HEK293 (cell line): ENCODE measurements at regions of chr4 and their contacts with region 1.

Region 1: DNA sequence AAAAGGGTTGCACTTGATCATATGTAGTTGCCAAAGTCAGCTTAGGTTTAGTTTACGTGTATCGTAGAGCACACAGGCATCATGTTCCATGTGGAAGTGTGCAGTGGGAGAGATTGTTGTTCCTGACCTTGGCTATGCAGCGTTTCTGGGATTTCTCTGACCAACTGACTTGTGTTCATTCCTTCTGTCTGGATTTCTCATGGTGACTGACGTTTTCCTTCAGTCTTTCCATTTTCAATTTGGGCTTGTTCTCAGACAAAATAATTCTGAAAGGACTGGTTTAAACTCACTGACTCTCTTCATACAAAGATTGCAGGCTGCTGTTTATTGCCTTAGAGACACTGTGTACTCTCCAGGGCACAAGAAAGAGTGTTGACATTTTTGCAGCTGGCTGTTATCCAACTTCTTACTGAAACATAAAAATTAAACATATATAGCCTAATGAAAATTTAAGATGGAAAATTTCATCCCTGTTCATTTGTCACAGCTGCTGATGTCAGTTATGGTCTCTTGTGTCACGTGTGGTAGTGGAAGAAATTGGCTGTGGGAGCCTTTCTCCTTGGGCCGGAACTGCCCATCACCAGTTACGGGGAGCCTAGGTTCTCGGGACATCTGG is 95.4 kb downstream of the TNIP2 start:
- H3K4me3 ChIP-seq: no peak overlapping the region
- H3K27ac ChIP-seq: no peak overlapping the region
- H3K4me1 ChIP-seq: no peaks in the 10 kb centered on the region
- CTCF ChIP-seq: no peak

Region 2: GRCh38 chr4:2462218-2462991 is 198.3 kb before region 1 on chr4:
- CTCF ChIA-PET with region 1: no interaction called
- POLR2A ChIA-PET with region 1: no interaction called
- H3K4me3 ChIP-seq: peak overlapping the region; percentile 23
- H3K27ac ChIP-seq: peak overlapping the region; percentile 54; the same call in 1 of the 2 replicates
- H3K4me1 ChIP-seq: no peaks in the 10 kb centered on the region; the same call in 1 of the 2 replicates
- CTCF ChIP-seq: no peak

Region 3: DNA sequence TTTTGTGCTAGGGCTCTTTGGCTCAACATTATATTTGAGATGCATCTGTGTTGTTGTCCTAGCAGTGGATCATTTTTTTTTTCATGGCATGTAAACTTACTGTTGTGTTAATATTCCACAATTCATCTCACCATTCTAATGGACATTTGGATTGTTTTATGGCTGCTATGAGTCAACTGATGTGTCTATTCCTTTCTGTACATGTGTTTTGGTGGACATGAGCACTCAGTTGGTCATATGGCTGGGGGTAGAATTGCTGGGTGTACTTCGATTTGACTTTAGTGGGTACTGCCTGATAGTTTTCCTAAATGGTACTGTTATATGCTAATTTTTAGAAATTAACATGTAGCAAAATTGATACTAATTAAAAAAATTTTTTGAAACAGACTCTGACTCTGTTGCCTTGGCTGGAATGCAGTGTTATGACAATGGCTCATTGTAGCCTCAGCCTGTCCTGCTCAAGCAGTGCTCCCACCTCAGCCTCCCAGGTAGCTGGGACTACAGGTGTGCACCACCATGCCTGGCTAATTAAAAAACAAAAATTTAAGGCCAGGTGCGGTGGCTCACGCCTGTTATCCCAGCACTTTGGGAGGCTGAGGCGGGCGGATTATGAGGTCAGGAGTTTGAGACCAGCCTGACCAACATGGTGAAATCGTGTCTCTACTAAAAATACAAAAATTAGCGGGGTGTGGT is 115.2 kb before region 1 on chr4:
- CTCF ChIA-PET with region 1: no interaction called
- POLR2A ChIA-PET with region 1: no interaction called
- H3K4me3 ChIP-seq: no peak overlapping the region
- H3K27ac ChIP-seq: no peak overlapping the region
- H3K4me1 ChIP-seq: no peaks in the 10 kb centered on the region
- CTCF ChIP-seq: no peak

Region 4: DNA sequence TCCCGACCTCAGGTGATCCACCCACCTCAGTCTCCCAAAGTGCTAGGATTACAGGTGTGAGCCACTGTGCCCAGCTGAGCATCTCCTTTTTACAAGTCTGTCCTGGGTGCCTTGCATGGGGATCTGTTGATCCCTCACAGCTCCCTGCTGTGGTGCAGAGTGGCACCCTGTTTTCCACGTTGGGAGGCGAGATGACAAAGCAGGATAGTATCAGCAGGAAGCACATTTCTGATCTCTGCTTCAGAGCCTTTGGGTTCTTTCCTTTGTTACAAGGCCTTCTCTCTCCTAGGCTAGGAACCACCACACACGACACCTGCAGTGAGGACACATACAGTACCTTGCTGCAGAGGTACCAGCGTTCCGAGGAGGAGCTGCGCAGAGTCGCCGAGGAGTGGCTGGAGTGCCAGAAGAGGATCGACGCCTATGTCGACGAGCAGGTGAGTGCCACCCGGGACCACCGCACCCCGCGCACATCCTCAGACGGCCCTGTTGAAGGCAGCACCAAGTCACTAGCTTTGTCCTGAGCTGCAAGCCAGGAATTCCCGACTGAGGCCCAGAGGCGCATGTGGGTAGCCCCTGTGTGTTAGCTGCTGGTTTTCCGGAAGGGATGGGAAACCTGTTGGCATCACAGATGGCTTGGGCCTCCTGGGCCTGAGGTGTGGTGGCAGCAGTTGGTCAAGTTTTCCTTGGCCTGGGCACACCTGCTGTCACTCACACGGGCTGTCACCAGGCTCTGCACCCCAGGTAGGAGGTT is 14.1 kb before region 1 on chr4:
- CTCF ChIA-PET with region 1: no interaction called
- POLR2A ChIA-PET with region 1: interaction called, 10 read pairs
- H3K4me3 ChIP-seq: no peak overlapping the region
- H3K27ac ChIP-seq: no peak overlapping the region
- H3K4me1 ChIP-seq: no peaks in the 10 kb centered on the region
- CTCF ChIP-seq: no peak